Activated CD8-positive, alpha-beta memory T cell treated with anti-CD3 and anti-CD28 coated beads, Interleukin-2, amount 10 ng/mL, durations not matched to agents 7 days and 5 days (primary cell): ENCODE measurements at regions of chr18 and their contacts with region 1.

Region 1: GRCh38 chr18:32026491-32027086 is 8.0 kb downstream of the RNF125 start:
- DNase-seq: no peak
- ATAC-seq: peak; percentile 60
- H3K4me3 Mint-ChIP-seq: peak overlapping the region; percentile 69
- H3K27ac Mint-ChIP-seq: peak overlapping the region; percentile 83
- H3K4me1 Mint-ChIP-seq: peaks cover 73% of the 10 kb centered on the region
- H3K27me3 Mint-ChIP-seq: no peaks in the 10 kb centered on the region

Region 2: GRCh38 chr18:32040936-32041335 is 14.3 kb after region 1 on chr18:
- CTCF ChIA-PET with region 1: interaction called, 25 read pairs
- DNase-seq: peak; percentile 88
- ATAC-seq: peak; percentile 93
- H3K4me3 Mint-ChIP-seq: peak overlapping the region; percentile 63
- H3K27ac Mint-ChIP-seq: peak overlapping the region; percentile 95
- H3K4me1 Mint-ChIP-seq: peaks cover 62% of the 10 kb centered on the region
- H3K27me3 Mint-ChIP-seq: no peaks in the 10 kb centered on the region